ENCODE measurements at regions of chr12 and their contacts with region 1.

Region 1: GRCh38 chr12:104064031-104064822 is at the start of gene HCFC2:
- DNase-seq: peak; percentile 96
- total RNA-seq, gene HCFC2: 14.4 TPM

Region 2: GRCh38 chr12:103930034-103930786 is 134.0 kb before region 1 on chr12 and contains the start of gene HSP90B1:
- intact Hi-C with region 1: loop called (anchors 1 kb)
- DNase-seq: peak; percentile 99
- total RNA-seq, gene HSP90B1: 433 TPM

Region 3: DNA sequence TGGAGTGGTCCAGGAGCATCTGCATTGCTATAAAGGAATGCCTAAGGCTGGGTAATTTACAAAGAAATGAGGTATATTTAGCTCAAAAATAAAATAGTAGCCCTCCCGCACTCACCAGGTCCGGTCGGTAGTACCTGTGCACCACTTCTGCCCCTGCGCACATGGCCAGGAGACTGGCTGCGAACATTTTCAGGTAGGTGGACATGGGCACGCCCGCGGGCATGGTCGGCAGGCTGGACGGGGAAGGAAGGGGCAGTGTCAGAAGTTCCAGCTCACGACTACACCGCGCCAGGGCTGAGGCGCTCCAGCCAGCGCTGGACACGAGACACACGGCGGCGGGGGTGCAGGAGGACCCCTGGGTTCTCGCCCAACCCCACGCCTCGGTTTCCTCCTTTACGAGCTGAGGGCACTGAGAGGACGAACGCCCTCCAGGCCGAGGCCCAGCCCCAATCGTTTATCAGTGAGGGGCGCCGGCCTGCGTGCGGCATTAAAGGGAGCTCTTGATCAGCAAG is 107.7 kb before region 1 on chr12:
- intact Hi-C with region 1: loop called (anchors 1 kb)
- DNase-seq: peak; percentile 74

Region 4: GRCh38 chr12:103965590-103966504 is 98.4 kb before region 1 on chr12 and contains the start of gene TDG:
- intact Hi-C with region 1: loop called (anchors 1 kb)
- DNase-seq: peak; percentile 100
- total RNA-seq, gene TDG: 13.0 TPM

Region 5: GRCh38 chr12:104108755-104109445 is 44.7 kb after region 1 on chr12:
- intact Hi-C with region 1: loop called (anchors 5 kb)
- DNase-seq: peak; percentile 85

Region 6: GRCh38 chr12:104137913-104138796 is 73.9 kb after region 1 on chr12 and contains the start of gene NFYB:
- intact Hi-C with region 1: loop called (anchors 5 kb)
- DNase-seq: peak; percentile 97
- total RNA-seq, gene NFYB: 31.1 TPM

Region 7: DNA sequence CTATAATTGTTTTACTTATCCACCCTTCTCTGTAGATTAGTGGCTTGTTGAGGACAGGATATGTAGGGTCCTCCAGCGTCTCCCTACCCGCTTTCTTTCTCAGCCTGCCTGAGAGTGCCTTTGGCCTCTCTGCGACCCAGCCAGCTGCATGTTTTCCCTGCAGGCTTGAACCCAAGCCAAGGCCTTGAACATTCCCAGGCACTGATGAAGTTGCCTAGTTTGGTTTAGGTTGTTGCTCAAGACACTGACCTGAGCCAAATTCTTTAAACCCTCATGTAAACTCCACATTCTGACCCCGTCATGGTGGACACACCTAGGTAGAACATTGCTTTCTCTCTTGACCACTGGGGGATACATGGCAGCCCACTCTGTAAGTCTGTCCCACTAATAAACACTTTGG is 117.9 kb after region 1 on chr12:
- intact Hi-C with region 1: no loop called
- DNase-seq: no peak

Region 8: DNA sequence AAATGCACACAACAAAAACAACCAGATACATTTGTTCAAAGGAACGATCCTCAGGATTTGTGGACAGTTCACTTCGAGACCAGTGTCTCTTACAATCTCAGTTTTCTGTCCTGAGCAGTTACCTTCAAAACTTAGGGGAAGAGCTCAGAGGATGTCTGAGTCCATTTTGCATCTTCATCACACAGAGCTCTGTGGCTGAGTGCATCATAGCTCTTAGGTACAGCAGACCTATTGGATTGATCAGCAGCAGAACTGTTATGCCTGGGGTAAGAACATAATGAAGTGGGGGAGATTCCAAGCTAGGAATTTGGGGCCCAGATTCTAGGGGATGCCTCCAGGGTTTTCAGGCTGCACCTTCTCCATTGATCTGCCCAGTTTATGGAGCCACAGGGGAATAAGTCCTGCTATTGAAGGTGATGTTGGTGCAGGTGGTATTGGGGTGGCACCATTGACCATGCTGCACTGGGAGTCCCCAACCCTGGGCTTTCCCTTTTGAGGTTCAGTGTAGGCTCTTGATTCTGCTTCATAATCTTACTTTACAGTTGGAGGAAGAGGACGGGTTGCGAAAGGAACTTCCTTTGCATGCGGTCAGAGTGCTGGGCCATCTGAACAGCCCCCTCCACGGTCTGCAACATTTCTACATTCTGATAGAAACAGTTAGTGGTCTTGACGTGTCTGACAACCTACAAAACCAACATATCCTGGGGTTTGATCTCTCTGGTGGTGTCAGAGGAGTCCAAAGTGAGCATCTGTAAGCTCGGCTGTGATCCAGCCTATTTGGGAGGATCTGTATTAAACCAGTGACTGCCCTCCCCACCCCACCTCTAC is 505.3 kb after region 1 on chr12:
- intact Hi-C with region 1: no loop called
- DNase-seq: no peak